Posterior vena cava (tissue), 2 donors: ENCODE measurements at regions of chr1 and their contacts with region 1.

Region 1: GRCh38 chr1:206583707-206584648 is 28.3 kb downstream of the EIF2D start:
- DNase-seq: peak; percentile 93

Region 2: GRCh38 chr1:206544562-206545257 is 39.3 kb before region 1 on chr1:
- intact Hi-C with region 1: loop called in 1 of 2 experiments (anchors 2 kb)
- DNase-seq: peak; percentile 88

Region 3: DNA sequence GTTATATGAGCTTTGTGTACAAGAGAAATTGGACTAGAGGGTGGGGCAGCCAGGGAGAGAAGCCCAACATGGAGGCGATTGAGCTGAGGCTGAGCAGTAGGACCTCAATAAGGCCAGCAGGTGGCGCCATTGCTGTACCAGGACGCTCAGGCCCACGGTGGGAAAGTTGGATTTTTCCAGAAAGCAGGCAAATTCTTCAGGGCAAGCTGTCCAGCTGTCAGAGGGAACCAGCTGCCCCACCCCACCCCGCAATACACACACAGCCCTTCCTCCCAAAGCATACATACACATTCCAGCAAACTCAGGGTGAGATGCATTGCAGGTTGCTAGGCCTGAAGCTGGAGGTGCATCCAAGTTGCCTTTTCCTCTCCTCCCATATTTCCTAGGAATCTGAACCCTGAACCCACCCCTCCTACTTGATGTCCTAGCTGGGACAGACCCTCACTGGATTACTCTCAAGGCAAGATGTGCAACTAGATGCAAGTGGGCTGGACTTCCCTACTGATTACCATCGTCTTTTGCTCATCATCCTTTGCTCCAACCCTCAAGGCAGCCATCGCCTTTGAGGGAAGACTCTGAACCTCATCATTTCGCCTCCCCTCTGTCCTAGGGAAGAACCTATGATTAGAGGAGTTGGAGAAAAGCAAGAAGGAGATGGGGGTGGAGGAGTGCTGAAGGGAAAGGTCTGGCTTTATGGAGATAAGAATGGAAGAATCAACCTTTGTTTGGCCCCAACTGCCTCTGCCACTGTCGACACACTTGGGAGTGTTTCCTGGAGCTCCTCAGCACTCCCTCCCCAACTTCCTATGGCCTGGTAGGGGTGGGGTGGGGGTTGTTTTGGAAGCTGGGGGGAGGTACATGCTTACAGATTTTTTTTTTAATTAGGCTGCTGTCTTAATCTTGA is 1301.4 kb after region 1 on chr1:
- intact Hi-C with region 1: no loop called
- DNase-seq: peak; percentile 95